ENCODE measurements at regions of chr11 and their contacts with region 1.

Region 1: DNA sequence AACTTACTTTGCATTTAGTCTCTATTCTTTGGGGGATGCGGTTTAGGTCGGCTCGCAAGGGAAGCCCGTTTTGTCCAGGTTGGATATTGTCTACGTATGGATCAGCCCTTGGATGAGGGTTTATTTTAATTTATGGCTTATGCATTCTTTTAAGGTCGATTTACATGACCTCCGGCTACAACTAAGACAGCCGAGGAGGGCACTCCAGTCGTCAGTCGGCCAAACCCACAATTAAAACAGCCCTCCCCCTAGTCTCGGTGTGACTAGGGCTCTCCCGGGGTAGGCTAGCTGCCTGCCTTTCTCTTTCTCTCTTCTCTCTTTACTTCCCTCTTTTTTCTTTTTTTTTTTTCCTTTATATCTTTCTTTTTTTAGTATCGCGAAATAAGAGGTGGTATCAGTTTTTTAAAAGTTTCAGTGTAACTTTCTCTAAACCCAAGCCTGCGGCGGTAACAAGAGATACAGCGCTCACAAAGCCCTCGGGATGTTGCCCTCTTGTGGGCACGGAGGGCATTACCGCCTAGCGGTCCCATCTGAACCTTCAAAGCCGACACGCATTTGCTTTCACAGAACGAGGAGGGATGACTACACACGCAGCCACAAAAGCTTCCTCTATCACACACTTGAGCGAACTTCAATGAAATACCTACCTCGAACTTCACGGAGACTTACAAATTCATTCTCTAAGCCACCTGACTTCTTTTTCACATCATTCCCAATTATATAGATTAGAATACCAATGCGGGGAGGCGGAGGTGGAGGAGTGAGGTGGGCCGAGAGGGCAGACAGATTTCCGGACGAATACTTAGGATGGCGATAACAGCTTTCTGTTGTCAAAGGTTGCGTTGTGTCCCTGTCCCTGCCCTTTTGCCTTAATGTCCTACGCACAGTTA is 132.3 kb upstream of the C11orf58 start:
- DNase-seq: peak; percentile 79 to 86
- ATAC-seq: peak; percentile 60 to 87
- H3K4me3 ChIP-seq: peak overlapping the region; percentile 50
- H3K27ac ChIP-seq: no peak overlapping the region
- H3K4me1 ChIP-seq: peaks cover 13% of the 10 kb centered on the region; the same call in 2 of the 3 replicates
- CTCF ChIP-seq: peak; percentile 89
- EP300 ChIP-seq: no peak
- POLR2A ChIP-seq: no peak
- RAD21 ChIP-seq: peak; percentile 70 to 71

Region 2: DNA sequence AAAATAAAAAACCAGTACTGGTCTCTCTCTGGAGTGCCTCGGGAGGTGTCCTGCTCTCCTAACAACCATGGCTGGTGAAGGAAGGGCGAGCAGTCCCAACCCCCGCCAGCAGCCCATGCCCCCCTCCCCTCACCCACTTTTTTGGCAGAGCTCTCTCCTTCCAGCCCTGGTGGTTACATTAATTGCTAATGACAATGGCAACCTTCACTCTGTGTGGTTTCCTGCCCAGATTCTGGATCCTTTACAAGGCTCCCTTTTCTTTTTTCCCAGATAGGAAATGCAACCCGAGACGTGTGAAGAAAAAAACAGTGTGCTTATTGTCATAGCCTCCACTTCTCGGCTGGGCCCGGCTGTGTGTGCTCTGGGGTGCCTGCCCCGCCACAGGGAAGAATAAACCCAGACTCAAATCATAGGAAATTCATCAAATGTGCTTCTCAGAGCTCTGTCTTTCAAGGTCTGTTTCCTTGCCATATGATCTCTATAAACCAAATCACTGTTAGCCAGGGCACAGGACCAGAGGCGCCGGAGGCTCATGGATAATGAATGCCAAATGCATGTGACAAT is 762.7 kb before region 1 on chr11:
- CTCF ChIA-PET with region 1: interaction called, 3 read pairs
- POLR2A ChIA-PET with region 1: interaction called, 10 read pairs
- DNase-seq: no peak
- ATAC-seq: no peak
- H3K4me3 ChIP-seq: no peak overlapping the region
- H3K27ac ChIP-seq: no peak overlapping the region
- H3K4me1 ChIP-seq: no peaks in the 10 kb centered on the region
- CTCF ChIP-seq: no peak
- EP300 ChIP-seq: no peak
- POLR2A ChIP-seq: no peak
- RAD21 ChIP-seq: no peak

Measured in A549 (cell line).